ENCODE measurements at regions of chr4 and their contacts with region 1.

Region 1: DNA sequence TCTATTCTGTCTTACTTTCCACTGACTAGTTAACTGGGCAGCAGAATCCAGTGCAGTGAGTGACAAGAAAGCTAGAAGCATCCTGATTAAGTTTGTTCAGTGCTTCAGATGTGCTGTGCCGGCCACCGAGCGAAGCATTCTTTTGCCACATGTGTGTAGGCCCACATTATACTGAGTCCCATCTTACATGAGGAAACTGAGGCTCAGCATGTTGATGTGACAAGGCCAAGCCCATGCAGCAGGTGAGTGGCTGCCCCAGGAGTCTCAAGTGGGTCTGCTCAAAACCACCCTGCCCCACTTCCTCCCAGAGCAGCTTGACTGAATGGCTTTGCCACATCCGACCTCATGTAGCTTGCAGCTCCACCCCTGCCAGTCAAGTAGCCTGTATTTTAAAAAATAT is 50.5 kb downstream of the RHOH start:
- DNase-seq: peak in 7 of 9 donors; percentile 68 to 75 (median 73)
- ATAC-seq: peak; percentile 83
- H3K4me3 ChIP-seq: peak overlapping the region; percentile 14
- H3K4me3 Mint-ChIP-seq: peak overlapping the region; percentile 37 to 83 (median 69)
- H3K27ac ChIP-seq: peak overlapping the region; percentile 78
- H3K27ac Mint-ChIP-seq: peak overlapping the region; percentile 84 to 99 (median 96)
- H3K4me1 ChIP-seq: peaks cover 61 to 82% of the 10 kb centered on the region in 2 donors
- H3K4me1 Mint-ChIP-seq: peaks cover 53 to 93% (median 84%) of the 10 kb centered on the region in 7 donors
- H3K27me3 ChIP-seq: no peaks in the 10 kb centered on the region
- H3K27me3 Mint-ChIP-seq: no peaks in the 10 kb centered on the region

Region 2: GRCh38 chr4:38980903-38981676 is 1266.3 kb before region 1 on chr4:
- CTCF ChIA-PET with region 1: no interaction called
- POLR2A ChIA-PET with region 1: no interaction called
- intact Hi-C with region 1: no loop called
- DNase-seq: no peak
- ATAC-seq: no peak
- H3K4me3 ChIP-seq: no peak overlapping the region
- H3K4me3 Mint-ChIP-seq: peak overlapping the region in 1 of 10 donors; percentile 50
- H3K27ac ChIP-seq: no peak overlapping the region
- H3K27ac Mint-ChIP-seq: peak overlapping the region in 2 of 9 donors; percentile 28 to 65
- H3K4me1 ChIP-seq: no peaks in the 10 kb centered on the region
- H3K4me1 Mint-ChIP-seq: peaks cover 2 to 55% (median 5%) of the 10 kb centered on the region in 7 donors
- H3K27me3 ChIP-seq: no peaks in the 10 kb centered on the region
- H3K27me3 Mint-ChIP-seq: no peaks in the 10 kb centered on the region

Region 3: GRCh38 chr4:40289366-40290188 is 42.2 kb after region 1 on chr4:
- CTCF ChIA-PET with region 1: no interaction called
- POLR2A ChIA-PET with region 1: interaction called, 10 read pairs
- intact Hi-C with region 1: no loop called
- DNase-seq: peak in 8 of 9 donors; percentile 38 to 75 (median 64)
- ATAC-seq: peak; percentile 89
- H3K4me3 ChIP-seq: peak overlapping the region; percentile 3
- H3K4me3 Mint-ChIP-seq: peak overlapping the region; percentile 35 to 88 (median 70)
- H3K27ac ChIP-seq: peak overlapping the region; percentile 65
- H3K27ac Mint-ChIP-seq: peak overlapping the region in 8 of 9 donors; percentile 83 to 96 (median 92)
- H3K4me1 ChIP-seq: peaks cover 18 to 45% of the 10 kb centered on the region in 2 donors
- H3K4me1 Mint-ChIP-seq: peaks cover 40 to 84% (median 67%) of the 10 kb centered on the region in 7 donors
- H3K27me3 ChIP-seq: no peaks in the 10 kb centered on the region
- H3K27me3 Mint-ChIP-seq: no peaks in the 10 kb centered on the region

Region 4: GRCh38 chr4:40316782-40317635 is 69.7 kb after region 1 on chr4:
- CTCF ChIA-PET with region 1: interaction called, 7 read pairs
- POLR2A ChIA-PET with region 1: interaction called, 206 read pairs
- intact Hi-C with region 1: loop called in 1 of 2 experiments (anchors 2 kb)
- DNase-seq: peak; percentile 39 to 83 (median 76)
- ATAC-seq: peak; percentile 81
- H3K4me3 ChIP-seq: peak overlapping the region; percentile 75
- H3K4me3 Mint-ChIP-seq: peak overlapping the region; percentile 79 to 93 (median 86)
- H3K27ac ChIP-seq: peak overlapping the region; percentile 92
- H3K27ac Mint-ChIP-seq: peak overlapping the region; percentile 90 to 99 (median 99)
- H3K4me1 ChIP-seq: peaks cover 7 to 19% of the 10 kb centered on the region in 2 donors
- H3K4me1 Mint-ChIP-seq: peaks cover 23 to 71% (median 61%) of the 10 kb centered on the region in 7 donors
- H3K27me3 ChIP-seq: no peaks in the 10 kb centered on the region
- H3K27me3 Mint-ChIP-seq: no peaks in the 10 kb centered on the region

Measured in naive thymus-derived CD4-positive, alpha-beta T cell (primary cell).